ENCODE measurements at regions of chrX and their contacts with region 1.

Region 1: GRCh38 chrX:108312938-108313337 is 125.3 kb downstream of the COL4A6 start:
- DNase-seq: no peak

Region 2: DNA sequence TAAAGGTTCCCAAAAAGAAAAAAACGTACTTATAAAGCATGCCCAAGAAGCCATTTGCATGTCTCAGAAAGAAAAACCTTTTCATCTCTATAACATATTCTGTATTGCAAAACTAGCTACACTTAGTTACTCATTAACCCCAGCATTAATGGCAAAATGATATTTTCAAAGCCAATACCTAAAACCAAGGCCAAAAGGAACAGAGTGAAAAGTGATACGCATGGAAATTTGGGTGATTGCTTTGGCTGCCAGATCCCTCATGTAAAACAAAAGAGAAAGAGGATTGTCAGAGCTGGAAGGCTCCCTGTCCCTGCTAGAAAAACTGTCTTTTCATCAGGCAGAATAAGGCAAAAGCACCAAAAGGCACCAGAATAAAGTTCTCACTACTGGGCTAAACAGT is 1748.0 kb before region 1 on chrX:
- intact Hi-C with region 1: loop called in 1 of 2 experiments (anchors 10 kb)
- DNase-seq: no peak

Measured in posterior vena cava (tissue), 2 donors.